GM12878 (cell line): ENCODE measurements at regions of chr3 and their contacts with region 1.

Region 1: GRCh38 chr3:50436114-50436674 is 67.2 kb downstream of the CACNA2D2 start:
- DNase-seq: no peak
- ATAC-seq: peak; percentile 94
- H3K4me3 ChIP-seq: no peak overlapping the region
- H3K27ac ChIP-seq: no peak overlapping the region
- H3K4me1 ChIP-seq: no peaks in the 10 kb centered on the region
- H3K27me3 ChIP-seq: no peaks in the 10 kb centered on the region; a peak in 2 of 4 replicates
- CTCF ChIP-seq: peak; percentile 62 to 84 (median 79)
- EP300 ChIP-seq: no peak
- POLR2A ChIP-seq: no peak
- RAD21 ChIP-seq: peak; percentile 64

Region 2: GRCh38 chr3:50542177-50543034 is 106.2 kb after region 1 on chr3:
- CTCF ChIA-PET with region 1: interaction called, 8 read pairs
- POLR2A ChIA-PET with region 1: no interaction called
- RAD21 ChIA-PET with region 1: interaction called, 3 read pairs
- SMC1A ChIA-PET with region 1: interaction called, 3 read pairs
- in situ Hi-C with region 1: no loop called
- intact Hi-C with region 1: loop called (anchors 1 kb)
- DNase-seq: no peak
- ATAC-seq: peak; percentile 87
- H3K4me3 ChIP-seq: no peak overlapping the region
- H3K27ac ChIP-seq: no peak overlapping the region
- H3K4me1 ChIP-seq: no peaks in the 10 kb centered on the region
- H3K27me3 ChIP-seq: peaks cover 3 to 5% of the 10 kb centered on the region in 2 experiments; a peak in 3 of 4 replicates
- CTCF ChIP-seq: peak; percentile 86 to 90 (median 86)
- EP300 ChIP-seq: no peak
- POLR2A ChIP-seq: no peak
- RAD21 ChIP-seq: peak; percentile 54

Region 3: GRCh38 chr3:50550079-50550741 is 114.0 kb after region 1 on chr3:
- CTCF ChIA-PET with region 1: no interaction called
- POLR2A ChIA-PET with region 1: no interaction called
- RAD21 ChIA-PET with region 1: no interaction called
- SMC1A ChIA-PET with region 1: no interaction called
- in situ Hi-C with region 1: no loop called
- intact Hi-C with region 1: loop called (anchors 1 kb)
- DNase-seq: no peak
- ATAC-seq: peak; percentile 86
- H3K4me3 ChIP-seq: no peak overlapping the region
- H3K27ac ChIP-seq: no peak overlapping the region
- H3K4me1 ChIP-seq: no peaks in the 10 kb centered on the region
- H3K27me3 ChIP-seq: no peaks in the 10 kb centered on the region; a peak in 1 of 4 replicates
- CTCF ChIP-seq: peak; percentile 67 to 79 (median 70)
- EP300 ChIP-seq: no peak
- POLR2A ChIP-seq: no peak
- RAD21 ChIP-seq: peak; percentile 66